ENCODE measurements at regions of chr5 and their contacts with region 1.

Region 1: GRCh38 chr5:34898258-34898895 is 16.9 kb downstream of the RAD1 start:
- DNase-seq: peak; percentile 56
- H3K4me3 Mint-ChIP-seq: no peak overlapping the region
- H3K27ac Mint-ChIP-seq: no peak overlapping the region
- H3K4me1 Mint-ChIP-seq: no peaks in the 10 kb centered on the region
- H3K27me3 Mint-ChIP-seq: no peaks in the 10 kb centered on the region

Region 2: GRCh38 chr5:33565324-33565723 is 1333.1 kb before region 1 on chr5:
- CTCF ChIA-PET with region 1: no interaction called
- POLR2A ChIA-PET with region 1: no interaction called
- DNase-seq: no peak
- H3K4me3 Mint-ChIP-seq: no peak overlapping the region
- H3K27ac Mint-ChIP-seq: no peak overlapping the region
- H3K4me1 Mint-ChIP-seq: no peaks in the 10 kb centered on the region
- H3K27me3 Mint-ChIP-seq: no peaks in the 10 kb centered on the region

Region 3: GRCh38 chr5:34486160-34486848 is 412.1 kb before region 1 on chr5:
- CTCF ChIA-PET with region 1: interaction called, 15 read pairs
- POLR2A ChIA-PET with region 1: no interaction called
- DNase-seq: peak; percentile 64
- H3K4me3 Mint-ChIP-seq: no peak overlapping the region
- H3K27ac Mint-ChIP-seq: no peak overlapping the region
- H3K4me1 Mint-ChIP-seq: no peaks in the 10 kb centered on the region
- H3K27me3 Mint-ChIP-seq: peaks cover 38% of the 10 kb centered on the region

Region 4: DNA sequence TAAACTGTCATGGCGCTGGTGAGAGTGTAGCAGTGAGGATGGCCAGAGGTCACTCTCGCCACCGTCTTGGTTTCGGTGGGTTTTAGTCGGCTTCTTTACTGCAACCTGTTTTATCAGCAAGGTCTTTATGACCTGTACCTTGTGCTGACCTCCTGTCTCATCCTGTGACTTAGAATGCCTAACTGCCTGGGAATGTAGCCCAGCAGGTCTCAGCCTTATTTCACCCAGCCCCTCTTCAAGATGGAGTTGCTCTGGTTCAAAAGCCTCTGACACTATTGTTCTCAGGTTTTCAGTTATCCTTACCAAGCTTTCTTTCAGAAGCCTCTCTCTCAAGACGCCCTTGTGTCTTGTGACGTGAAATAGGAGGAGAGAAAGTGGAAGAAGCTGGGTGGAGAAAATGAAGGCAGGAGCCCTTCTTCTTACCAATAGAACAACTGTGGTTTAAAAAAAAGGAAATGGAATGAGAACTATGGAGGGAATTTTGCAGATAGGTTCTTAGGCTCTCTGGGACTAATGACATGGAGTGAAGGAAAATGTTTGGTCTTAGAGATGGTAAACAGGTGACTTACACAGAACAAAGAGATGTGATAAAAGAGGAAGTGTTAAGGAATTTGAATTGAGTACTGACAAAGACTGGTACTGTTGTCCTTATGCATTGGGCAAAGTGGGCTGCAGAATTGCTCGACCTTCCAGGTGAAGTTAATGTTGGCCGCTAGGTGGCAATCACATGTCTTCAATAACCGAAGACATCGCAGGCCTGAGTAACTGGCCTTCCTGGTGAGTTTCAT is 375.6 kb before region 1 on chr5:
- CTCF ChIA-PET with region 1: interaction called, 42 read pairs
- POLR2A ChIA-PET with region 1: no interaction called
- DNase-seq: peak; percentile 54
- H3K4me3 Mint-ChIP-seq: no peak overlapping the region
- H3K27ac Mint-ChIP-seq: no peak overlapping the region
- H3K4me1 Mint-ChIP-seq: no peaks in the 10 kb centered on the region
- H3K27me3 Mint-ChIP-seq: peaks cover 11% of the 10 kb centered on the region

Region 5: DNA sequence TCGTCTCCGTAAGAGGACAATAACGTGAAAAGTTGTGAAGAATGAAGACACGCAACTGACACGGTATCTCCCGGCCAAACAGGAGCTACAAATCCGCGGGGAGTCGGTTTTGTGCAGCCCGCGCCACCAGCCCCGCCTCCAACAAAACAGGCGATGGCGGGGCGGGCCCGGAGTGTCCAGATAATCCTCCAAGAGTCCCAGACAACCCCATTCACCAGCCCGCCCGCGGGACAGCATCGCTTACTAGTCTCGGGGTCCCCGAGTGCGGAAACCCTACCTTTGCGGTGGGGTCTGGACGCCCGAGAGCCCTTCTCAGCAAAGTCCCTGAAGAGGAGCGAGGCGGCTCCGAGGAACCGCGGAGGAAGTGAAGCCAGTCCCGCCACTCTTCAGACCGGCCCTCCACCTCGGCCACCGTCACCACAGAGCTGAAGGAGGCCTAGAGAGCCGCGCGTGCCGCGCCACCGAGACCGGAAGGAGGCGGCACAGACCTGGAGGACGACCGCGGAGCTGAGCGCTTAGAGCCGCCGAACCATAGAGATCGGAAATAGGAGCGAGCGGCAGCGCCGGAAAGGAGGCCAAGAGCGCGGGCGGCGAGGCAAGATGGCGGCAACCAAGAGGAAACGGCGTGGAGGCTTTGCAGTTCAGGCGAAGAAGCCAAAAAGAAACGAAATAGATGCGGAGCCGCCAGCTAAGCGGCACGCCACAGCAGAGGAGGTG is 16.9 kb after region 1 on chr5 and contains the starts of genes BRIX1 and RAD1:
- CTCF ChIA-PET with region 1: interaction called, 11 read pairs
- POLR2A ChIA-PET with region 1: interaction called, 12 read pairs
- DNase-seq: peak; percentile 96
- H3K4me3 Mint-ChIP-seq: no peak within 1 kb of the TSS
- H3K27ac Mint-ChIP-seq: no peak within 1 kb of the TSS
- H3K4me1 Mint-ChIP-seq: peaks cover 41% of the 10 kb centered on the region
- H3K27me3 Mint-ChIP-seq: no peaks in the 10 kb centered on the region
- total RNA-seq, gene BRIX1: 33.0 to 36.0 TPM
- total RNA-seq, gene RAD1: 27.5 to 29.2 TPM